Sciatic nerve (tissue), 2 donors: ENCODE measurements at regions of chr1 and their contacts with region 1.

Region 1: DNA sequence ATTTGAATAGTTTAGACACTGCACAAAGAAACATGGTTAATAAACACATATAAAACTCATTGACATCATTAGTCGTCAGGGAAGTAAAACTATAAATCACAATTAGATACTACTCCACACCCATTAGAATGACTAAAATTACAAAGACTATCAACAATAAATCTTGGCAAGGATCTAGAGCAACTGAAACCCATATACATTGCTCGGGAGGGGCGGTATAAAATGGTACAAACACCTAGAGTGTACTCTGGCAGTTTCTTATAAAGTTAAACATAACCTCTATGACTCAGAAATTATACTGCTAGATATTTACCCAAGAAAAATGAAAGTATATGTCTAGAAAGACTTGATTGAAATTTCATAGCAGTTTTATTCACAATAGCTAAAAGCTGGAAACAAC is 434.2 kb downstream of the RWDD3 start:
- DNase-seq: no peak
- ATAC-seq: no peak

Region 2: DNA sequence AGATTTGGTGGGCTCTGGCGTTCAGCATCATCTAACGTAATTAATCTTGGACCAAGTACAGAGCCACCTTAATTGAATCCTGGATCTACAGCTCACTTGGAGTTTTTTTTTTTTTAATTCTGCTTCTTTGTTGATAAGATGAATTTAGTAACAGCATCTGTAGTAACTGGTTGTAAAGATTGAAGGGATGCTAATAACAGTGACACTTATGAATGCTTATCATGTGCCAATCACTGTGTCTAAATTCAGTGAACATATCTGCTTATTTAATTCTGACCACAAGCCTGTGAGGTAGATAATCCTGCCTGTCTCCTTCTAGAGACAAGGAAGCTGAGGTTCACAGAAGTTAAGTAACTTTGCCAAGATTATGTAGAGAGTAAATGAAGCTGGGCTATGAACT is 26.1 kb before region 1 on chr1:
- intact Hi-C with region 1: loop called (anchors 1 kb)
- DNase-seq: no peak
- ATAC-seq: no peak